ENCODE measurements at regions of chr1 and their contacts with region 1.

Region 1: DNA sequence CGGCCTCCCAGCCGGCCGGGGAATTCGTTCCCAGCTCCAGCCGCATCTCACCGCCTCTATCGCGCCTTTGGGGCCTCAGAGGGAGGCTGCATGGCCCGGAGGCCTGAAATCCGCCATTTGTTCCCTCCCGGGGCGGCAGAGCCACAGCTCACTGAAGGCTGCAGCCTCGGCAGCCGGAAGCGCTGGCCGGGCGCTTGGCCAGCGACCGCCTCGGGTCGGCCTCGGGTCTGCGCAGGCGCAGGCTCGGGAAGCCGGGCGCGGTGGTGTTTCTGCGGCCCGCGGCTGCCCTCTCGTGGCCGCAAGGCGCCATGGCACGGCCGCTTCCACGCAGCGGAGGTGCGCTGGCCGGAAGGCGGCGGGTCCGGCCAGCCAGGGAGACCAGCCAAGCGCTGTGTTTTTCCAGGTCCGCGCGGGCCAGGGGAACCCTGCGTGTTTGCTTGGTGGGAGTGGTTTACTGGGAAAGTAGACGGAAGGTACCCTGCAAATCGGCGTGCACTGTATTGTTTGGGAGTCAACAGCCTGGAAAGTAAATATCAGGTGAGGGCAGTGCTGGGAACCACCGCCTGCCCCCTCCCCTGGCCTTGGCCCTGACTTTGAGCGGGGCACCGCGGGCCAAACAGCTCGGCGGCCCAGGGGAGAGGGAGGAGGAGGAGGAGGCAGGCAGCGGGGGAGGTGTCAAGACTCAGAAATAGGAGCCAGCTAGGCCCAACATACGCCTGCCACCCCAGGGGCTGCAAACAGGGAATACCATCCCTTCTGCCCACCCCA is 52.7 kb upstream of the CD34 start:
- DNase-seq: peak; percentile 94 to 96
- H3K4me3 ChIP-seq: peak overlapping the region; percentile 59 to 69
- H3K27ac ChIP-seq: peak overlapping the region; percentile 95
- H3K4me1 ChIP-seq: peaks cover 46% of the 10 kb centered on the region
- H3K27me3 ChIP-seq: no peaks in the 10 kb centered on the region
- CTCF ChIP-seq: peak; percentile 98 to 100 (median 99)
- POLR2A ChIP-seq: peak in 1 of 2 donors; percentile 83

Region 2: GRCh38 chr1:207828485-207829158 is 135.0 kb before region 1 on chr1:
- intact Hi-C with region 1: loop called (anchors 5 kb)
- DNase-seq: no peak
- H3K4me3 ChIP-seq: no peak overlapping the region
- H3K27ac ChIP-seq: peak overlapping the region; percentile 94
- H3K4me1 ChIP-seq: peaks cover 86% of the 10 kb centered on the region
- H3K27me3 ChIP-seq: no peaks in the 10 kb centered on the region
- CTCF ChIP-seq: peak; percentile 70 to 92 (median 74)
- POLR2A ChIP-seq: no peak

Region 3: GRCh38 chr1:207848234-207848633 is 115.4 kb before region 1 on chr1:
- intact Hi-C with region 1: no loop called
- DNase-seq: no peak
- H3K4me3 ChIP-seq: no peak overlapping the region
- H3K27ac ChIP-seq: peak overlapping the region; percentile 66
- H3K4me1 ChIP-seq: peaks cover 91% of the 10 kb centered on the region
- H3K27me3 ChIP-seq: no peaks in the 10 kb centered on the region
- CTCF ChIP-seq: no peak
- POLR2A ChIP-seq: no peak

Region 4: DNA sequence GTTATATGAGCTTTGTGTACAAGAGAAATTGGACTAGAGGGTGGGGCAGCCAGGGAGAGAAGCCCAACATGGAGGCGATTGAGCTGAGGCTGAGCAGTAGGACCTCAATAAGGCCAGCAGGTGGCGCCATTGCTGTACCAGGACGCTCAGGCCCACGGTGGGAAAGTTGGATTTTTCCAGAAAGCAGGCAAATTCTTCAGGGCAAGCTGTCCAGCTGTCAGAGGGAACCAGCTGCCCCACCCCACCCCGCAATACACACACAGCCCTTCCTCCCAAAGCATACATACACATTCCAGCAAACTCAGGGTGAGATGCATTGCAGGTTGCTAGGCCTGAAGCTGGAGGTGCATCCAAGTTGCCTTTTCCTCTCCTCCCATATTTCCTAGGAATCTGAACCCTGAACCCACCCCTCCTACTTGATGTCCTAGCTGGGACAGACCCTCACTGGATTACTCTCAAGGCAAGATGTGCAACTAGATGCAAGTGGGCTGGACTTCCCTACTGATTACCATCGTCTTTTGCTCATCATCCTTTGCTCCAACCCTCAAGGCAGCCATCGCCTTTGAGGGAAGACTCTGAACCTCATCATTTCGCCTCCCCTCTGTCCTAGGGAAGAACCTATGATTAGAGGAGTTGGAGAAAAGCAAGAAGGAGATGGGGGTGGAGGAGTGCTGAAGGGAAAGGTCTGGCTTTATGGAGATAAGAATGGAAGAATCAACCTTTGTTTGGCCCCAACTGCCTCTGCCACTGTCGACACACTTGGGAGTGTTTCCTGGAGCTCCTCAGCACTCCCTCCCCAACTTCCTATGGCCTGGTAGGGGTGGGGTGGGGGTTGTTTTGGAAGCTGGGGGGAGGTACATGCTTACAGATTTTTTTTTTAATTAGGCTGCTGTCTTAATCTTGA is 78.2 kb before region 1 on chr1:
- intact Hi-C with region 1: loop called (anchors 5 kb)
- DNase-seq: peak in 1 of 2 donors; percentile 86
- H3K4me3 ChIP-seq: no peak overlapping the region
- H3K27ac ChIP-seq: peak overlapping the region; percentile 85
- H3K4me1 ChIP-seq: peaks cover 58% of the 10 kb centered on the region
- H3K27me3 ChIP-seq: no peaks in the 10 kb centered on the region
- CTCF ChIP-seq: peak; percentile 83 to 98 (median 93)
- POLR2A ChIP-seq: no peak

Region 5: DNA sequence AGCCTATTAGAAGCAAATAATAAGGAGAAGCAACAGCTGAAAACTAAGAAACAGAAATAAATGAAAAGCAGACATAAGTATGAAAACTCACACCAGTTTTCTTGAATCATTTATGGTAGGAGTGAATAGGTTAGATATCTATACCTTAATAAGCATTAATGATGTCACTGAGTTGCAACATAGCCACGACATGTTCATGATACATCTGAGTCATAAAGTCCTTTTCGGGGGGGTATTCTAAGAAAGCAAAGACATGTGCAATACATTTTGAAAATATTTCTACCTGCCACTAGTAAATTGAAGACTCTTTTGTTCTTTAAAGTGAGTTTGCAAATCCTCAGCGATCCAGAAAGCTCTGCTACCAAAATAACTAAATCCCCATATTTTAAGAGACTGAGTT is 59.8 kb before region 1 on chr1:
- intact Hi-C with region 1: loop called (anchors 5 kb)
- DNase-seq: no peak
- H3K4me3 ChIP-seq: no peak overlapping the region
- H3K27ac ChIP-seq: peak overlapping the region; percentile 22
- H3K4me1 ChIP-seq: peaks cover 18% of the 10 kb centered on the region
- H3K27me3 ChIP-seq: no peaks in the 10 kb centered on the region
- CTCF ChIP-seq: no peak
- POLR2A ChIP-seq: no peak